SK-N-SH (cell line): ENCODE measurements at regions of chr12 and their contacts with region 1.

Region 1: DNA sequence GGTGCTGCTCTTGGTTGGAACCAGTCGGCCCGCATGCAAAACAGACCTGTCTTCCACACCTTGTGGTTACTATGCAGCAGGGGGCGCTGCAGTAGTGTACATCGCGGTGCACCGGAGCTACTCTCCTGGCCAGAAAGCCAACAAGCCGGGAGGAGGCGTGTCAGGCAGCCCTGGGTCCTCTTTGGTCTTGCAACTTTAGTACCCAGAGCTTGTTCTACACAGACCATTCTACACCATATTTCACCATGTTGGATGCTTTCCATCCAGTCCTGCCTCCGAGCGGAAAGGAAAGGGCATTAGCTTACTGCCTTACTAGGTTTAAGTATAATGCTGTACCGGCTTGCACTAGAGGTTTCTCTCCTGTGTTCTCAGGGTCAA is 927 bp upstream of the TMTC2 start:
- DNase-seq: peak; percentile 74
- H3K4me3 ChIP-seq: peak overlapping the region; percentile 81 to 96
- H3K27ac ChIP-seq: peak overlapping the region; percentile 68 to 91; a peak in 3 of 4 replicates
- H3K4me1 ChIP-seq: peaks cover 0 to 17% of the 10 kb centered on the region in 2 experiments; a peak in 2 of 4 replicates
- H3K27me3 ChIP-seq: no peaks in the 10 kb centered on the region
- CTCF ChIP-seq: peak; percentile 91
- EP300 ChIP-seq: no peak
- RAD21 ChIP-seq: peak; percentile 98

Region 2: DNA sequence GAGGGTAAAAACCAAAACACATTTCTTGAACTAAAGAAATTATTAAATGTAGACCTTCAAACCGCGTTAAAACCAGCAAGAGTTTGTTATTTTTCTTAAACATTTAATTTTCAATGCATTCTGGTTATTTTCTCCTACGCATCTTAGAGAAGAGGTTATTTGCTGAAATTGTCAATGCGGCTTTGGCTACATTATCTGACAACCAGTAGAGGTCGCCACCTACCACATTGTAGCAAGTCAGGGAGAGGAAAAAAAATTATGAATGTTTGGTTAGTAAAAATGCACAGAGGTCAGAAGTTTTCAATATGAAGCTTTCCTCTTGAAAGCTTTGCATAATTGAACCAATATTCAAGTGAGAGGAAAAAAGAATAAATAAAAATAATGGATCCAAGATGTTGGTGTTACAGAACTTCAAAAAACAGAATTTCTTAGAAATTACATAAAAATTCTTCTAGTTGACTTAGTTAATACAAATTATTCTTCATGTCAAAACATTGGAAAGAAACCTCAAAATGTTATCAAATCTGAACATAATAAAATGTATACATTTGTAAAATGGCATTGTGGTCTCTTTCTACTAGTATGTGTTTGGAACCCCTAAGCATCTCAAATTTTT is 158.5 kb before region 1 on chr12:
- CTCF ChIA-PET with region 1: interaction called, 10 read pairs
- POLR2A ChIA-PET with region 1: no interaction called
- DNase-seq: peak; percentile 26
- H3K4me3 ChIP-seq: peak overlapping the region in 1 of 2 experiments; percentile 42; a peak in 1 of 4 replicates
- H3K27ac ChIP-seq: no peak overlapping the region
- H3K4me1 ChIP-seq: no peaks in the 10 kb centered on the region; a peak in 1 of 4 replicates
- H3K27me3 ChIP-seq: no peaks in the 10 kb centered on the region
- CTCF ChIP-seq: peak; percentile 98
- EP300 ChIP-seq: no peak
- RAD21 ChIP-seq: peak; percentile 89

Region 3: GRCh38 chr12:82672811-82673495 is 12.8 kb before region 1 on chr12:
- CTCF ChIA-PET with region 1: interaction called, 35 read pairs
- POLR2A ChIA-PET with region 1: no interaction called
- DNase-seq: no peak
- H3K4me3 ChIP-seq: no peak overlapping the region
- H3K27ac ChIP-seq: no peak overlapping the region
- H3K4me1 ChIP-seq: peaks cover 0 to 8% of the 10 kb centered on the region in 2 experiments; a peak in 2 of 4 replicates
- H3K27me3 ChIP-seq: no peaks in the 10 kb centered on the region
- CTCF ChIP-seq: no peak
- EP300 ChIP-seq: no peak
- RAD21 ChIP-seq: no peak

Region 4: GRCh38 chr12:82758749-82759330 is 73.1 kb after region 1 on chr12:
- CTCF ChIA-PET with region 1: interaction called, 31 read pairs
- POLR2A ChIA-PET with region 1: no interaction called
- DNase-seq: peak; percentile 34
- H3K4me3 ChIP-seq: no peak overlapping the region
- H3K27ac ChIP-seq: peak overlapping the region in 1 of 2 experiments; percentile 69; a peak in 2 of 4 replicates
- H3K4me1 ChIP-seq: peaks cover 0 to 11% of the 10 kb centered on the region in 2 experiments; a peak in 3 of 4 replicates
- H3K27me3 ChIP-seq: no peaks in the 10 kb centered on the region
- CTCF ChIP-seq: peak; percentile 24; the same call in 1 of the 2 replicates
- EP300 ChIP-seq: peak in 1 of 2 experiments; percentile 73; a peak in 2 of 4 replicates
- RAD21 ChIP-seq: peak; percentile 84

Region 5: GRCh38 chr12:82800185-82800584 is 114.4 kb after region 1 on chr12:
- CTCF ChIA-PET with region 1: interaction called, 14 read pairs
- POLR2A ChIA-PET with region 1: no interaction called
- DNase-seq: peak; percentile 74
- H3K4me3 ChIP-seq: no peak overlapping the region
- H3K27ac ChIP-seq: peak overlapping the region in 1 of 2 experiments; percentile 78; a peak in 2 of 4 replicates
- H3K4me1 ChIP-seq: peaks cover 0 to 13% of the 10 kb centered on the region in 2 experiments; a peak in 2 of 4 replicates
- H3K27me3 ChIP-seq: no peaks in the 10 kb centered on the region
- CTCF ChIP-seq: no peak
- EP300 ChIP-seq: peak in 1 of 2 experiments; percentile 82; a peak in 1 of 4 replicates
- RAD21 ChIP-seq: no peak

Region 6: DNA sequence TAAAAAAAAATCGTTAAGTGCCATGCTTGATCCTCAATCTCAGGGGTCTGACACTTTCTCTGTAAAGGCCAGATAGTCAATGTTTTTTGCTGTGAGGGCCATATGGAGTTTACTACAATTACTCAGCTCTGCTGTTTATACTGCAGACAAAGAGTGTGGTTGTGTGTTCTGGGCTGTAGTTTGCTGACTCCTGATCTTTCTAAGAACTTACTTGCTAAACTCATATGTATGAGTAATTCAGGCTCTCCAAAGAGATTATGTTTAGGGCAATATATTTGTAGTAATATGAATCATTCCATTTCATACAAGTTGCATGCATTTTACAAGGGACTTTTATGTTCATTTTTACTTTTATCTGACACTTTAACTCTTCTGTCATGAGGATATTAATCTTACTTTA is 189.2 kb after region 1 on chr12:
- CTCF ChIA-PET with region 1: interaction called, 12 read pairs
- POLR2A ChIA-PET with region 1: no interaction called
- DNase-seq: no peak
- H3K4me3 ChIP-seq: no peak overlapping the region
- H3K27ac ChIP-seq: no peak overlapping the region; a peak in 1 of 4 replicates
- H3K4me1 ChIP-seq: peaks cover 0 to 6% of the 10 kb centered on the region in 2 experiments; a peak in 2 of 4 replicates
- H3K27me3 ChIP-seq: no peaks in the 10 kb centered on the region
- CTCF ChIP-seq: no peak
- EP300 ChIP-seq: no peak
- RAD21 ChIP-seq: no peak

Region 7: DNA sequence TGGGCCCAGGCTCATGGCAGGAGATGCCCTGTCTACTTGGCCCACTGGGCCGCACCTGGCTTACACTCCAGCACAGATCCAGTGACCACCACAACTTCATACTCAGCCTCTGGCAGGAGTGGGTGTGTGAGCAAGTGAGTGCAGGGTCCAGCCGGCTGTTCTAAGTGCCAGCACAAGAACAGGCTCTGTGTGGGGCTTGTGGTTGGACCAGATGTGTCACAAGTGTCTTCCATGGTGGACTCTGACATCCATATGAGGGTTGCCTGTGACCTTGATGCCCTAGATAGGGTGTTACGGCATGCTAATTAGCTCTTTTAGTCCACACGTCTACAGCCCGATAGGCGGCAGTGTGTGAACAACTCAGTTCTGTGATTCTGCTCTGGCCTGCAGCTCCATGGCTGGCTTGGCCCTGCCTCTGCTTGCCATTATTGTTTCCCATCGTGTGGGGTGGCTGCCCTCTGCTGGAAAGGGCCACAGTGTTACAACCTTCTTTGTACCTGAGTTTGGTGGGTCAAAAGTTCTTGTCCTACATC is 1137.7 kb after region 1 on chr12:
- CTCF ChIA-PET with region 1: interaction called, 39 read pairs
- POLR2A ChIA-PET with region 1: no interaction called
- DNase-seq: peak; percentile 12
- H3K4me3 ChIP-seq: no peak overlapping the region; a peak in 1 of 4 replicates
- H3K27ac ChIP-seq: no peak overlapping the region
- H3K4me1 ChIP-seq: peaks cover 0 to 10% of the 10 kb centered on the region in 2 experiments; a peak in 1 of 4 replicates
- H3K27me3 ChIP-seq: no peaks in the 10 kb centered on the region
- CTCF ChIP-seq: peak; percentile 53
- EP300 ChIP-seq: no peak
- RAD21 ChIP-seq: peak; percentile 68